CD4-positive, alpha-beta T cell (primary cell): ENCODE measurements at regions of chr6 and their contacts with region 1.

Region 1: DNA sequence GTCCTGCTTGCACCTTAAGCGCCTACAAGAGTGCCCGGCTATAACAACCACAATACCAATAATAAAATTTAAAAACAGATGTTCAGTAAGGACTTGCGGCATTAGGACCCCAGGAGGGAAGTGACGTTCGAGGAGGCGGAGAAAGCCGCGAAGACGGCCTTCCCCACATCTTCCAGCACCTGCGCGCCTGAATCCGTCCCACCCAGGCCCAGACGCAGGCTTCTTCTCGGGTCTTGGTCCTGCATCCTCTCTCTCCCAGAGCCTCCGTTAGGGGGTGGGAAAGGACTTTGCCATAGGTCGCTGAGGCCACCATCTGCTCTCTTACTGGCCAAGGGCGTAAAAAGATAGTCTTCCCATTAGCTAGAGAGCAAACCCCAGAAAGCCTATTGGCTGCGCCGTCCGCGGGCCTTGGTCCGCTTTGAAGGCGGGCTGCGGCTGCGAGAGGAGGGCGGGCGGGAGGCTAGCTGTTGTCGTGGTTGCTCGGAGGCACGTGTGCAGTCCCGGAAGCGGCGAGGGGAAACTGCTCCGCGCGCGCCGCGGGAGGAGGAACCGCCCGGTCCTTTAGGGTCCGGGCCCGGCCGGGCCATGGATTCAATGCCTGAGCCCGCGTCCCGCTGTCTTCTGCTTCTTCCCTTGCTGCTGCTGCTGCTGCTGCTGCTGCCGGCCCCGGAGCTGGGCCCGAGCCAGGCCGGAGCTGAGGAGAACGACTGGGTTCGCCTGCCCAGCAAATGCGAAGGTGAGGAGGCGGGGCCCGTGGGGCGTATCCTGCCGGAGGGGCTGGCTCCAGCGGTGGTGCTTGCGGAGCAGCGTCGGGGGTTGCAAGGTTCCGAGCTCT is at the start of gene CNPY3:
- DNase-seq: peak; percentile 90 to 98 (median 92)
- ATAC-seq: peak; percentile 75
- H3K4me3 ChIP-seq: peak within 1 kb of the TSS; percentile 79
- H3K4me3 Mint-ChIP-seq: peak within 1 kb of the TSS; percentile 99
- H3K27ac ChIP-seq: peak within 1 kb of the TSS; percentile 88 to 96
- H3K27ac Mint-ChIP-seq: peak within 1 kb of the TSS; percentile 99
- H3K4me1 ChIP-seq: peaks cover 52% of the 10 kb centered on the region
- H3K4me1 Mint-ChIP-seq: peaks cover 53% of the 10 kb centered on the region
- H3K27me3 ChIP-seq: no peaks in the 10 kb centered on the region
- H3K27me3 Mint-ChIP-seq: no peaks in the 10 kb centered on the region
- CTCF ChIP-seq: no peak
- total RNA-seq, gene CNPY3: 41.2 to 43.8 TPM

Region 2: DNA sequence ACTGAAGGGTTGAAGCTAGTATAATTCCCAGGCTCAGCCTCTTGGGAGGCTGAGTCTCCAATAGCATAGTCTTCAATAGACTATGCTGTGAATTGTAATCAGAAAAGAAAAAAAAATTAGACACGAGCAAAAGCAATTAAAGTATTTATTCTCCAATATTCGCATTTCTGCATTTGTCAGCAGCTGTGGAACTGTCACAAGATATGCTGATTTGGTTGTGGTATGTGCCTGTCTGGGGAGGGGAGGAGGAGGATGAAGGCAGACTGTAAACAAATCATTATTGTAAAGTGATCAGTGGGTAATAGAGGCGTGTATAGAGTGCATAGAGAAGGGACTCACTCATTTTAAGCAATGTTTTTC is 157.5 kb before region 1 on chr6:
- CTCF ChIA-PET with region 1: no interaction called
- POLR2A ChIA-PET with region 1: interaction called, 15 read pairs
- intact Hi-C with region 1: no loop called
- DNase-seq: peak in 8 of 14 experiments; percentile 20 to 84 (median 41)
- ATAC-seq: peak; percentile 27
- H3K4me3 ChIP-seq: peak overlapping the region; percentile 19
- H3K4me3 Mint-ChIP-seq: peak overlapping the region; percentile 76
- H3K27ac ChIP-seq: peak overlapping the region; percentile 92 to 94
- H3K27ac Mint-ChIP-seq: peak overlapping the region; percentile 99
- H3K4me1 ChIP-seq: peaks cover 75% of the 10 kb centered on the region
- H3K4me1 Mint-ChIP-seq: peaks cover 75% of the 10 kb centered on the region
- H3K27me3 ChIP-seq: no peaks in the 10 kb centered on the region
- H3K27me3 Mint-ChIP-seq: no peaks in the 10 kb centered on the region
- CTCF ChIP-seq: no peak

Region 3: DNA sequence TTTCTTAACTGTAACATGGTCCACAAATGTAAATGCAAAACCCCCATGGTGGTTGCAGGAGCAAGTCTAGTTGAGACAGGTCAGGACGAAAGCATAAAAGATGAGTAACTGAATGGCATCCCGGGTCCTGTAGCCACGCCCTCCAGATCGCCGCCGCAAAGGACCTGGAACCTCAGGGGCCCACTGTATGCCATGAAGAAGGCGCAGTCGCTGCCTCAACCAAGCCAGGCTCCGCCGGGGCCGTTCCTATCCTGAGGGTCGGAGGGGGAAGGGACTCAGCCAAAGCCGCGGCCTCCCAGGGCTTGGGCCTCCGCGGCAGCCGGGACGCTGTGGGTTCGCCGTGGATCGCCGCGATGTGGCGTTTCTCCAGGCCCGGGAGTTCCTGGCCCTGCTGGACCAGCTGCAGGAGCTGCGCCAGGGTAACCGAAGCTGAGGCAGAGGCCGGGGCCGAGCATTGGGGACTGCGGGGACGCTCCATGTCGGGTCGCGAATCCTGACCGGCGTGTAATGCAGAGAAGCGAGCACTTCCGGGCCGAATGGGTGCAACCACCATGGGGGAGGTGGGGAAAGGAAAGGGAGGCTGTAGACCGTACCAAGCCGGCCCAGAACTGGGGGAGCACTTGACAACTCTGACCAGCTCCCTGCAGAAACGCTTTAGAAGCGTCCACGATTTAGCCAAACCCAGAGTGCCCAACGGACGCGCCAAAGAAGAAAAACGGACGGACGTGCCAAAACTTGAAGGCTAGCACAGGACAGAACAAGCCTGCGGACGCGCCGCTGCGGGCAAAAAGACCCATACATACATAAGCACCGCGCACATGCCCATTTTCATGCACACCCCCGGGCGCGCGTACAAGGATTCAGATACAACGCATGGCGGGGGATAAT is 38.6 kb before region 1 on chr6:
- CTCF ChIA-PET with region 1: no interaction called
- POLR2A ChIA-PET with region 1: interaction called, 24 read pairs
- intact Hi-C with region 1: no loop called
- DNase-seq: peak; percentile 77 to 93 (median 87)
- ATAC-seq: peak; percentile 93
- H3K4me3 ChIP-seq: peak overlapping the region; percentile 94
- H3K4me3 Mint-ChIP-seq: peak overlapping the region; percentile 91
- H3K27ac ChIP-seq: peak overlapping the region; percentile 86 to 89
- H3K27ac Mint-ChIP-seq: peak overlapping the region; percentile 94
- H3K4me1 ChIP-seq: peaks cover 17% of the 10 kb centered on the region
- H3K4me1 Mint-ChIP-seq: peaks cover 16% of the 10 kb centered on the region
- H3K27me3 ChIP-seq: no peaks in the 10 kb centered on the region
- H3K27me3 Mint-ChIP-seq: no peaks in the 10 kb centered on the region
- CTCF ChIP-seq: no peak

Region 4: DNA sequence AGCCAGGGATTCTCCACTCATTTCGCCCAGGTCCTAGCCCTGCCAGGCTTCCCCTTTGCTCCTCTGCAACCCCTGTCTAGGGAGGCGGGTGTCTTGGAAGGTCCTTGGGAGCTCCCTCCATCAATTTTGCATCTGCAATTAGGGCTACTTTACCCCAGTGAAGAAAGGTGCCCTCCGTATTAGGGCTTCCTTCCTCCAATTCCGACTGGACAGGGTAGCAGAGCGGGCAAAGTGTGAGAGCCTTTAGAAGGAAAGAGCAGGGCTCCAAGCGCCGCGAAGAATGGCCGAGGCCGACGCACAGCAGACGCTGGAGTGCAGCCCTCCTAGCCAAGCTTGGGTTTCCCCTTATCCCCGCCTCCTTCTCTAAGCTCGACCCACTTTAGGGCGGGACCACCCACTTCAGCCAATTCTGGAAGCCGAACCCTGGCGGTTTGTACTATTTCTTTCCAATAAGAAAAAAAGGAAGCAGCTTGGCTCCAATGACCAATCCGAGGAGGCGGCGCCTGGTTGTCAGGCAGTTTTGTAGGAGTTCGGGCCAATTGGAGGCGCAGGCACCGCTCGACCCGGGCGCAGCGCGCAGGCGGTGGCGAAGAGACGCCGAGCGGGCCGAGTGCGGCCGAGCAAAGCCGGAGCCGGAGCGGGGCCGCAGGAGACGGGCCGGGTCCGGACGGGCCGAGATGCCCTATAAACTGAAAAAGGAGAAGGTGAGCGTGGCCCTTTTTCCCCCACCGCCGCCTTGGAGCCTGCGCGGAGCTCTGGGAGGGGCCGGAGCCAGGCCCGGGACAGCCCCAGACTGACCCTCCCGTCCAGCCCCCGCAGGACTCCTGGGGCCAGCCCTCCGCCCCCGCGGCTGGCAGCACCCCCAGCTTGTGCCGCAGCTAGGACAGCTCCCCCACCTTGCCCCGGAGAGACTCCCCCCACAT is 55.1 kb after region 1 on chr6 and contains the start of gene PPP2R5D:
- CTCF ChIA-PET with region 1: interaction called, 4 read pairs
- POLR2A ChIA-PET with region 1: interaction called, 135 read pairs
- intact Hi-C with region 1: loop called (anchors 1 to 2 kb)
- DNase-seq: peak; percentile 93 to 99 (median 96)
- ATAC-seq: peak; percentile 90
- H3K4me3 ChIP-seq: peak within 1 kb of the TSS; percentile 81
- H3K4me3 Mint-ChIP-seq: peak within 1 kb of the TSS; percentile 93
- H3K27ac ChIP-seq: peak within 1 kb of the TSS; percentile 73 to 77
- H3K27ac Mint-ChIP-seq: peak within 1 kb of the TSS; percentile 96
- H3K4me1 ChIP-seq: peaks cover 56% of the 10 kb centered on the region
- H3K4me1 Mint-ChIP-seq: peaks cover 67% of the 10 kb centered on the region
- H3K27me3 ChIP-seq: no peaks in the 10 kb centered on the region
- H3K27me3 Mint-ChIP-seq: no peaks in the 10 kb centered on the region
- CTCF ChIP-seq: no peak
- total RNA-seq, gene PPP2R5D: 15.3 to 17.5 TPM

Region 5: DNA sequence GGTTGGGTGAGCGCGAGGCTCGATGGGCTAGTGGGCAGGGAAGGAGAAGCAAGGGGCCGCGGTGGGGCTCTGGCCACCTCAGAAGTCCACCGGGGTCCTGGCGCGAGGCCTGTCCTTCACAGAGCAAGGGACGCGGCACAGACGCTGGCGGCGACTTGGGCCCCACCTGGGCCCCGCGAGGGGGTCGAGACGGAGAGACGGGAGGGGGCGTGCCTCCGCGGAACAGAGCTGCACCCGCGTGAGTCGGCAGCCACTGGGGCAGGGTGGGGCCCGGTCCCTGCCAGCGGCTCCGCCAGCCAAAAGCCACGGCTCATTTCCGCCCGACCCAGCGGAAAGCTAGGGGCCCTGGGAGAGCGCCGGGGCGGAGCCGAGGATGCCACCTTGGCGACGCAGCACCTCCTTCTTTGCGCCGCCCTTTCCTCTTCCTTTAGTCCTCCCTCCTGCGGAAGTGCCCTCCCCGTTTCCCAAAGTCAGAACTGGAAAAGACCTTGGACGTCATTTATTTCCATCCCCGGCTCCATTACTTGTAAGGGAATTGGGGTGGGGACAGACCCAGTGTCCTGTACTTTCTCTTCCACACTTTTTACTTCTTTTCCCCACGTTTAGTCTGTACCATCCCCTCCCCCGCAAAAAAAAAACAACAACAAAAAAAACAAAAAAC is 124.5 kb after region 1 on chr6 and contains the start of gene CUL7:
- CTCF ChIA-PET with region 1: no interaction called
- POLR2A ChIA-PET with region 1: interaction called, 50 read pairs
- intact Hi-C with region 1: loop called (anchors 2 kb)
- DNase-seq: peak; percentile 78 to 95 (median 89)
- ATAC-seq: peak; percentile 99
- H3K4me3 ChIP-seq: peak within 1 kb of the TSS; percentile 93
- H3K4me3 Mint-ChIP-seq: peak within 1 kb of the TSS; percentile 98
- H3K27ac ChIP-seq: peak within 1 kb of the TSS; percentile 76 to 84
- H3K27ac Mint-ChIP-seq: peak within 1 kb of the TSS; percentile 96
- H3K4me1 ChIP-seq: peaks cover 45% of the 10 kb centered on the region
- H3K4me1 Mint-ChIP-seq: peaks cover 59% of the 10 kb centered on the region
- H3K27me3 ChIP-seq: no peaks in the 10 kb centered on the region
- H3K27me3 Mint-ChIP-seq: no peaks in the 10 kb centered on the region
- CTCF ChIP-seq: no peak
- total RNA-seq, gene CUL7: 5.9 to 6.9 TPM

Region 6: GRCh38 chr6:43369174-43370022 is 440.2 kb after region 1 on chr6 and contains the start of gene ZNF318:
- CTCF ChIA-PET with region 1: no interaction called
- POLR2A ChIA-PET with region 1: interaction called, 14 read pairs
- intact Hi-C with region 1: no loop called
- DNase-seq: peak; percentile 88 to 99 (median 92)
- ATAC-seq: peak; percentile 95
- H3K4me3 ChIP-seq: peak within 1 kb of the TSS; percentile 77
- H3K4me3 Mint-ChIP-seq: peak within 1 kb of the TSS; percentile 96
- H3K27ac ChIP-seq: peak within 1 kb of the TSS; percentile 76 to 85
- H3K27ac Mint-ChIP-seq: peak within 1 kb of the TSS; percentile 95
- H3K4me1 ChIP-seq: peaks cover 38% of the 10 kb centered on the region
- H3K4me1 Mint-ChIP-seq: peaks cover 49% of the 10 kb centered on the region
- H3K27me3 ChIP-seq: no peaks in the 10 kb centered on the region
- H3K27me3 Mint-ChIP-seq: no peaks in the 10 kb centered on the region
- CTCF ChIP-seq: no peak
- total RNA-seq, gene ZNF318: 20.4 TPM